Activated naive CD4-positive, alpha-beta T cell treated with anti-CD3 and anti-CD28 coated beads for 36 hours (primary cell): ENCODE measurements at regions of chr1 and their contacts with region 1.

Region 1: DNA sequence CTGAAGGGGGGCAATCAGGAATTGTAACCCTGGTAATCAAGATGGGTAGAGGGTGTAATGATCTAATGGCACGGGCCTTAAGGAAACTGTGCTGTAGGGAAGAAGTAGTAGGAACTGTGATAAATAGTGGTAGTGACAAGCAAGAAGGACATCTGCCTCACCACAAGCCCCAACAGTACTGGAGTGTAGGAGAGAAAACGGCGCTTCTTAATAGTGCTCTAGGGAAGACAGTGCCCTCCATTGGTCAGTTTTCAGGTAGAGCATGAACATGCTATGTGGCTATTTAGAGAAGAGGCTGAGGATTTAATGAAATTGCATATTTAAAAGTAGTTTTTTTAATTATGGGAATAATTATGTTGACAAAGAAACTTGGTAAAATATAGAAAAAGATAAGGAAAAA is 32.2 kb downstream of the SLC30A7 start:
- DNase-seq: peak; percentile 49
- H3K4me3 Mint-ChIP-seq: no peak overlapping the region
- H3K27ac Mint-ChIP-seq: no peak overlapping the region
- H3K4me1 Mint-ChIP-seq: peaks cover 30% of the 10 kb centered on the region
- H3K27me3 Mint-ChIP-seq: no peaks in the 10 kb centered on the region

Region 2: GRCh38 chr1:100941098-100941527 is 13.0 kb after region 1 on chr1:
- CTCF ChIA-PET with region 1: interaction called, 4 read pairs
- intact Hi-C with region 1: loop called (anchors 1 kb)
- DNase-seq: peak; percentile 58
- H3K4me3 Mint-ChIP-seq: peak overlapping the region; percentile 58
- H3K27ac Mint-ChIP-seq: peak overlapping the region; percentile 92
- H3K4me1 Mint-ChIP-seq: peaks cover 48% of the 10 kb centered on the region
- H3K27me3 Mint-ChIP-seq: peaks cover 2% of the 10 kb centered on the region